ENCODE measurements at regions of chr5 and their contacts with region 1.

Region 1: DNA sequence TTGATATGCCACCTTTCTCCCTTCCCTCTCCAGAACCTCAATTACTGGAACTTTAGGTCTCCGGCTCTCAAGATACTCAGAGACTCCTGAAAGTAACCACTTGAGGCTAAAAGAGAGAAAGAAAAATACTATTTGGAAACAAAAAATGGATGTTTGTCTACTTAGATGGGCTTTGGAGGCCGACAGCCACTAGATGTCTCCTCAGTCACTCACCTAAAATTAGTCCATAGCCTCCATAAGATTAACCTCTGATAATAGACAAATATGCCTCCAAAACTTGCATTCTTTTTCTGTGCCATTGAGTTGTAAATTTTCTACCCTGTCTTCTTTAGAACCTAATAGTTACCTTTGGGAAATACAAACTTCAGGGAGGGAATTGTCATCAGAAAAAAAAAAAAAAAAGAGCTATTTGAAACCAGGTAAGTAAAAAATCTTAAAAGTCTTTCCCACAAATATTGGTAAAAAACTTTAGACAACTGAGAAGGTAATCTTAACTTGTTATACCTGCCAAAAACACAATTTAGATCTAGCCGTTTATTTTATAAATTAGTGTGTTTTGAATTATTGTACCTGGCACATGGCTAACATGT is 11.2 kb upstream of the PCDH1 start:
- DNase-seq: peak; percentile 29
- H3K4me3 Mint-ChIP-seq: no peak overlapping the region
- H3K27ac Mint-ChIP-seq: no peak overlapping the region
- H3K4me1 Mint-ChIP-seq: no peaks in the 10 kb centered on the region
- H3K27me3 Mint-ChIP-seq: peaks cover 24% of the 10 kb centered on the region

Region 2: DNA sequence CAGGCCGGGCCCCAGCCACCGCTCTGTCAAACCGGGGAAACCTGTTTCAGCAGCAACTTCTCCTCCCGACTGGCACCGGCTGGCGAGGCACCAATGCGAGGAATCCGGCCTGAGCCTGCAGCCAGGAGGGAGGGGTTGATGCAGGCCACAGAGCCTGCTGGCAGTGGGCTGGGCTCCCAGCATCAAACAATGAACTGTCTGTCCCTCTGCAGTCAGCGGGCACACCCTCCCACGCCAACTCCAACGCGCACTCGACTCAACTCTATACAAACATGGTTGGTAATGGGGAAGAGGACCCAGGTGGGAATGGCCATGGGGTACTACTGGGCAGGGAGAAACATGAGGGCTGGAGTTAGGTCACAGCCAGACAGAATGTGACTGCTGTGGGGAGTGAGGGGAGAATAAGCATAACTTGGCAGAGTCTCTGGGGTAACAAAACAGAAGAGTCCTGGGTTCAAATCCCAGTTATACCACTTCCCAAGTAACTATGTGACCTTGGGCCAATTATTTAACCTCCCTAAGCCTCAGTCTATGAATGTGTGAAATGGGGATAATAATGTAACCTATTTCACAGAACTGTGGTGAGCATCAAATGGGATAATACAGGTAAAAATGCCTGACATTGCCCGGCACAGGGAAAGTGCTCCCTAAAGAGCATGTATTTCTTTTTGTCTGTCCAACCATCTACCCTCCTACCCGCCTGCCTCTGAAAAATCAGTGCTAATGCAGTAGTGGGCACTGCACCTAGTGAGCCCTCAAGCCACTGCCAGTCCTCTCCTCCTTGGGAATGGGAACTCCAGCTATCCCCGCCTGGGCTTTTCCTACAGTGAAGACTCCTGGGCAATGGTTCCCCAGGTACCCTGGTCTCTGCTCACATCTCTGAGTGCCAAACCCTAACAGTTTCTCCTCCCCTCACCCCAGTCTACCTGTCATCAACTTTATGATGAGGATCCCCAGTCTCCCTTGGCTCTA is 22.9 kb before region 1 on chr5:
- CTCF ChIA-PET with region 1: no interaction called
- intact Hi-C with region 1: no loop called
- DNase-seq: no peak
- H3K4me3 Mint-ChIP-seq: no peak overlapping the region
- H3K27ac Mint-ChIP-seq: no peak overlapping the region
- H3K4me1 Mint-ChIP-seq: no peaks in the 10 kb centered on the region
- H3K27me3 Mint-ChIP-seq: peaks cover 6% of the 10 kb centered on the region

Region 3: GRCh38 chr5:141914199-141914743 is 24.9 kb after region 1 on chr5:
- CTCF ChIA-PET with region 1: interaction called, 3 read pairs
- intact Hi-C with region 1: loop called (anchors 2 kb)
- DNase-seq: peak; percentile 25
- H3K4me3 Mint-ChIP-seq: peak overlapping the region; percentile 35
- H3K27ac Mint-ChIP-seq: no peak overlapping the region
- H3K4me1 Mint-ChIP-seq: peaks cover 5% of the 10 kb centered on the region
- H3K27me3 Mint-ChIP-seq: peaks cover 22% of the 10 kb centered on the region

Region 4: GRCh38 chr5:141929398-141930058 is 40.2 kb after region 1 on chr5:
- CTCF ChIA-PET with region 1: no interaction called
- intact Hi-C with region 1: no loop called
- DNase-seq: no peak
- H3K4me3 Mint-ChIP-seq: no peak overlapping the region
- H3K27ac Mint-ChIP-seq: no peak overlapping the region
- H3K4me1 Mint-ChIP-seq: peaks cover 9% of the 10 kb centered on the region
- H3K27me3 Mint-ChIP-seq: no peaks in the 10 kb centered on the region